Heart right ventricle (tissue), 16 donors: ENCODE measurements at regions of chr6 and their contacts with region 1.

Region 1: GRCh38 chr6:167200806-167201205 is 43.0 kb upstream of the GPR31 start:
- DNase-seq: no peak
- ATAC-seq: no peak
- H3K4me3 ChIP-seq: no peak overlapping the region
- H3K27ac ChIP-seq: no peak overlapping the region
- H3K4me1 ChIP-seq: no peaks in the 10 kb centered on the region
- H3K27me3 ChIP-seq: peaks cover 0 to 52% (median 22%) of the 10 kb centered on the region in 7 donors
- CTCF ChIP-seq: no peak

Region 2: GRCh38 chr6:167298153-167298552 is 97.3 kb after region 1 on chr6:
- intact Hi-C with region 1: loop called in 1 of 10 experiments (anchors 10 kb)
- DNase-seq: no peak
- ATAC-seq: no peak
- H3K4me3 ChIP-seq: no peak overlapping the region
- H3K27ac ChIP-seq: no peak overlapping the region
- H3K4me1 ChIP-seq: peaks cover 0 to 3% (median 0%) of the 10 kb centered on the region in 9 donors
- H3K27me3 ChIP-seq: peaks cover 0 to 9% (median 0%) of the 10 kb centered on the region in 7 donors
- CTCF ChIP-seq: no peak